Naive thymus-derived CD4-positive, alpha-beta T cell (primary cell): ENCODE measurements at regions of chr11 and their contacts with region 1.

Region 1: DNA sequence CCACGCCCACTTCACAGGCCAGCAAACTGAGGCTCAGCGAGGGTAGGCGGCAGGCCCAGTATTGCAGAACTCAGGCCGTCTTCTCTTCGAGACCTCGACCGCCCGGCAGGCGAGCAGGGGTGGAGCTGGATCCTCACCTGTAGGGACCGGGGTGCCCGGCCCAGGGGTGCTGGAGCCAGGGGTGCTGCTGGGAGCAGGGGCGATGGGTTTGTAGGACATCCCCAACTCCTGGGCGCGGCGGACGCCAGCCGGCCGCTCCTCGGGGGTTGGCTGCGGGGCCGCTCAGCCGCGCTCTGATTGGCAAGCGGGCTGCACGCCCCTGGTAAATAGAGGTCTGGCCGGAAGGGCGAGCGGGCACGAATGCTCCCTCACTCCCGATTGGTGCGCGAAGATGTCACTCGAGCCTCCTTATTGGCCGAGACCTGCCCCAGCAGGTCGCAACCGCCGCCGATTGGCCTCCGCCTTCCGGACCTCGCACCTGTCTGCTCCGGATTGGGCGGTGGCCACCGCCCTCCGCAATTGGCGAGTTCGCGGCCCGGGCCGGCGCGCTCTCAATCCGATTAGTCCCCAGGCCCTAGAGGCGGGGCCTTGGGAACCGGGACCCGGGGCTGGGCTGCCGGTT is at the start of gene CDK2AP2:
- DNase-seq: peak in 8 of 9 donors; percentile 89 to 97 (median 96)
- ATAC-seq: peak; percentile 81
- H3K4me3 ChIP-seq: peak within 1 kb of the TSS; percentile 91
- H3K4me3 Mint-ChIP-seq: peak within 1 kb of the TSS; percentile 89 to 95 (median 90)
- H3K27ac ChIP-seq: peak within 1 kb of the TSS; percentile 96
- H3K27ac Mint-ChIP-seq: peak within 1 kb of the TSS; percentile 87 to 98 (median 96)
- H3K4me1 ChIP-seq: peaks cover 40 to 43% of the 10 kb centered on the region in 2 donors
- H3K4me1 Mint-ChIP-seq: peaks cover 26 to 45% (median 36%) of the 10 kb centered on the region in 7 donors
- H3K27me3 ChIP-seq: no peaks in the 10 kb centered on the region
- H3K27me3 Mint-ChIP-seq: peaks cover 0 to 18% (median 0%) of the 10 kb centered on the region in 5 donors
- total RNA-seq, gene CDK2AP2: 31.0 to 168 (median 61.9) TPM

Region 2: DNA sequence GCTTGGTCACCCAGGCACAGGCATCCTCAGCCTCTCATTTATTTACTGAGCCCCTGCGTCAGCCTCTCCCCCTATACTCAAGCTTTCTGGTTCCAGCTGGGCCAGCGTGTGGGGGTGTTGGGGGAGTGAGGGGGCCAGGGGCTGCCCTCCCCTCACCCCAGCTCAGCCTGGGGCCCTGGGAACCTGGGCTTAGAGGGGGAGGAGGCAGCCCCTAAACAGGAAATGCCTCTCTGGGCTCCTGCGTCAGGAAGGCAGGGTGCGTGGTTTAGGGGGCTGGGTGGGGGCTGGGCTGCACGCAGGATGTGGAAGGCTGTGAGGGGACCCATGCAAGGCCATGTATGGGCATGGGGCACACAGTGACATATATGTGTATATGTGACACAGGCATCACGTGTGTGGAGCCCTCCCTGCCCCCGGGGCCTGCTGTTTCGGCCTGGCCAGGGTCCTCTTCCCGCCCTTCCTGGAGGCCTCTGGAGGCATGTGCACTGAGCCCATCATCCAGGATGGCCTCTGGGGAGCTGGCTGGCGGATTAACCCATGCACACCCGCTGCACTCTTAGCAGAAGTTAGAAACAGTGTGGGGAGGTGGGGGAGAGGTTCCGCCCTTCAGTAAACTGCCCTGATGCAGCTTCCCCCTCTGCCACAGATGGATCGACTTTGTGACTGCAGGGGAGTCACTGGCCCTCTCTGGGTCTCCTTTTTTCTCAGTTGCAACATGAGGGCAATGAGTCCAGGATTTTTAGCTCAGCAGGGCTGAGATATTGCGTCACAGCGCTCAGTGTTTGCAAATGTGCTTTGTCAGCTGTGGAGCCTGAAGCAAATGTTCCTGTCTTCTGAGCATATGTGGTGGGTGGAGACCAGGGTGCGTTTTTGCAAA is 1190.0 kb before region 1 on chr11:
- CTCF ChIA-PET with region 1: no interaction called
- POLR2A ChIA-PET with region 1: no interaction called
- intact Hi-C with region 1: loop called in 1 of 2 experiments (anchors 5 kb)
- DNase-seq: peak in 7 of 9 donors; percentile 79 to 96 (median 86)
- ATAC-seq: peak; percentile 93
- H3K4me3 ChIP-seq: peak overlapping the region; percentile 54
- H3K4me3 Mint-ChIP-seq: peak overlapping the region; percentile 45 to 89 (median 83)
- H3K27ac ChIP-seq: peak overlapping the region; percentile 99
- H3K27ac Mint-ChIP-seq: peak overlapping the region; percentile 88 to 100 (median 99)
- H3K4me1 ChIP-seq: peaks cover 32 to 60% of the 10 kb centered on the region in 2 donors
- H3K4me1 Mint-ChIP-seq: peaks cover 39 to 78% (median 63%) of the 10 kb centered on the region in 7 donors
- H3K27me3 ChIP-seq: no peaks in the 10 kb centered on the region
- H3K27me3 Mint-ChIP-seq: peaks cover 0 to 9% (median 0%) of the 10 kb centered on the region in 5 donors

Region 3: GRCh38 chr11:67239783-67240575 is 268.0 kb before region 1 on chr11:
- CTCF ChIA-PET with region 1: no interaction called
- POLR2A ChIA-PET with region 1: no interaction called
- intact Hi-C with region 1: loop called (anchors 1 to 5 kb)
- DNase-seq: peak; percentile 81 to 99 (median 98)
- ATAC-seq: peak; percentile 94
- H3K4me3 ChIP-seq: peak overlapping the region; percentile 89
- H3K4me3 Mint-ChIP-seq: peak overlapping the region; percentile 93 to 100 (median 98)
- H3K27ac ChIP-seq: peak overlapping the region; percentile 97
- H3K27ac Mint-ChIP-seq: peak overlapping the region; percentile 92 to 100 (median 99)
- H3K4me1 ChIP-seq: peaks cover 24 to 41% of the 10 kb centered on the region in 2 donors
- H3K4me1 Mint-ChIP-seq: peaks cover 47 to 62% (median 61%) of the 10 kb centered on the region in 7 donors
- H3K27me3 ChIP-seq: no peaks in the 10 kb centered on the region
- H3K27me3 Mint-ChIP-seq: no peaks in the 10 kb centered on the region

Region 4: GRCh38 chr11:67391304-67392132 is 116.5 kb before region 1 on chr11 and contains the start of gene RAD9A:
- CTCF ChIA-PET with region 1: interaction called, 4 read pairs
- POLR2A ChIA-PET with region 1: interaction called, 4 read pairs
- intact Hi-C with region 1: loop called (anchors 1 kb)
- DNase-seq: peak; percentile 80 to 94 (median 87)
- ATAC-seq: peak; percentile 90
- H3K4me3 ChIP-seq: peak within 1 kb of the TSS; percentile 49
- H3K4me3 Mint-ChIP-seq: peak within 1 kb of the TSS; percentile 84 to 95 (median 88)
- H3K27ac ChIP-seq: peak within 1 kb of the TSS; percentile 83
- H3K27ac Mint-ChIP-seq: peak within 1 kb of the TSS; percentile 47 to 92 (median 82)
- H3K4me1 ChIP-seq: peaks cover 15 to 16% of the 10 kb centered on the region in 2 donors
- H3K4me1 Mint-ChIP-seq: peaks cover 27 to 47% (median 34%) of the 10 kb centered on the region in 7 donors
- H3K27me3 ChIP-seq: no peaks in the 10 kb centered on the region
- H3K27me3 Mint-ChIP-seq: peaks cover 0 to 3% (median 0%) of the 10 kb centered on the region in 5 donors
- total RNA-seq, gene RAD9A: 25.6 to 48.0 (median 45.0) TPM

Region 5: GRCh38 chr11:67428052-67428914 is 79.7 kb before region 1 on chr11 and contains the start of gene RPS6KB2:
- CTCF ChIA-PET with region 1: no interaction called
- POLR2A ChIA-PET with region 1: interaction called, 4 read pairs
- intact Hi-C with region 1: loop called (anchors 1 kb)
- DNase-seq: peak; percentile 95 to 100 (median 98)
- ATAC-seq: peak; percentile 97
- H3K4me3 ChIP-seq: peak within 1 kb of the TSS; percentile 82
- H3K4me3 Mint-ChIP-seq: peak within 1 kb of the TSS; percentile 92 to 100 (median 98)
- H3K27ac ChIP-seq: peak within 1 kb of the TSS; percentile 97
- H3K27ac Mint-ChIP-seq: peak within 1 kb of the TSS; percentile 94 to 98 (median 96)
- H3K4me1 ChIP-seq: peaks cover 19 to 38% of the 10 kb centered on the region in 2 donors
- H3K4me1 Mint-ChIP-seq: peaks cover 19 to 62% (median 43%) of the 10 kb centered on the region in 7 donors
- H3K27me3 ChIP-seq: no peaks in the 10 kb centered on the region
- H3K27me3 Mint-ChIP-seq: no peaks in the 10 kb centered on the region
- total RNA-seq, gene RPS6KB2: 61.9 to 83.9 (median 77.7) TPM

Region 6: DNA sequence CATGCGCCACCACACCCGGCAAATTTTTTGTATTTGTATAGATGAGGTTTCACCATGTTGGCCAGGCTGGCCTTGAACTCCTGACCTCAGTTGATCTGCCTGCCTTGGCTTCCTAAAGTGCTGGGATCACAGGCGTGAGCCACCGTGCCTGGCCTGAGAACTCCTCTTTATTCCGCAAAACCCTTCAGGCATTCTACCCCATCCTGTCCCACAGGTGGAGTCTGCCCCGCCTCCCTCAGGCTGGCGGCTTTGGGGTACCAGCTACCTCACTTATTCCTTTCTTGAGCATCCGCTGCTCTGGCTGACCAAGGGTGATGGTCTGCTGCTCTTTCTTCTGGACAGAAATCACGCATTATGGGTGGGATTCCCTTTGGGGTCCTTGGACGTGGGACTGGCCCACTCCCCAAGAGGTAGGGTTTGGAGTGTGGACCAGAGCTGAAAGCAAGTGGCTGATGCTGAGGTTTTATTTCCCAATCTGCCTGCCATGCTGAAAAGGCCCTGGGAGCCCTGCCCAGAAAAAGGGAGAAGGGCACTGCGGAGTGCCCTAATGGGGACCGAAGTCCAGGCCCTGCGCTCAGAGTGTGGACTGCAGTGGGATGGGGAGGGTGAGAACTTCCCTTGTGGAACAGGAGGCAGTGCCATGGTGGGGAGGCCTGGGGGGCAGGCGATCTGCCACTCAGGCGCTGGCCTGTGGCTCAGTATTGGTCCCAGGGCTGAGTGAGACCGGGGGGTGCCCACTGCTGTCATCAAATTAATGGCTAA is 59.9 kb before region 1 on chr11:
- CTCF ChIA-PET with region 1: no interaction called
- POLR2A ChIA-PET with region 1: no interaction called
- intact Hi-C with region 1: no loop called
- DNase-seq: no peak
- ATAC-seq: no peak
- H3K4me3 ChIP-seq: no peak overlapping the region
- H3K4me3 Mint-ChIP-seq: peak overlapping the region in 7 of 10 donors; percentile 7 to 77 (median 23)
- H3K27ac ChIP-seq: peak overlapping the region; percentile 85
- H3K27ac Mint-ChIP-seq: peak overlapping the region in 8 of 9 donors; percentile 31 to 99 (median 96)
- H3K4me1 ChIP-seq: peaks cover 38 to 56% of the 10 kb centered on the region in 2 donors
- H3K4me1 Mint-ChIP-seq: peaks cover 41 to 80% (median 50%) of the 10 kb centered on the region in 7 donors
- H3K27me3 ChIP-seq: no peaks in the 10 kb centered on the region
- H3K27me3 Mint-ChIP-seq: no peaks in the 10 kb centered on the region

Region 7: GRCh38 chr11:67482825-67483798 is 24.9 kb before region 1 on chr11 and contains the start of gene AIP:
- CTCF ChIA-PET with region 1: interaction called, 6 read pairs
- POLR2A ChIA-PET with region 1: interaction called, 40 read pairs
- intact Hi-C with region 1: loop called (anchors 1 kb)
- DNase-seq: peak; percentile 88 to 99 (median 98)
- ATAC-seq: peak; percentile 89
- H3K4me3 ChIP-seq: peak within 1 kb of the TSS; percentile 80
- H3K4me3 Mint-ChIP-seq: peak within 1 kb of the TSS; percentile 90 to 100 (median 96)
- H3K27ac ChIP-seq: peak within 1 kb of the TSS; percentile 80
- H3K27ac Mint-ChIP-seq: peak within 1 kb of the TSS; percentile 95 to 100 (median 99)
- H3K4me1 ChIP-seq: peaks cover 40 to 42% of the 10 kb centered on the region in 2 donors
- H3K4me1 Mint-ChIP-seq: peaks cover 40 to 57% (median 51%) of the 10 kb centered on the region in 7 donors
- H3K27me3 ChIP-seq: no peaks in the 10 kb centered on the region
- H3K27me3 Mint-ChIP-seq: peaks cover 0 to 5% (median 0%) of the 10 kb centered on the region in 5 donors
- total RNA-seq, gene AIP: 107 to 156 (median 137) TPM

Region 8: DNA sequence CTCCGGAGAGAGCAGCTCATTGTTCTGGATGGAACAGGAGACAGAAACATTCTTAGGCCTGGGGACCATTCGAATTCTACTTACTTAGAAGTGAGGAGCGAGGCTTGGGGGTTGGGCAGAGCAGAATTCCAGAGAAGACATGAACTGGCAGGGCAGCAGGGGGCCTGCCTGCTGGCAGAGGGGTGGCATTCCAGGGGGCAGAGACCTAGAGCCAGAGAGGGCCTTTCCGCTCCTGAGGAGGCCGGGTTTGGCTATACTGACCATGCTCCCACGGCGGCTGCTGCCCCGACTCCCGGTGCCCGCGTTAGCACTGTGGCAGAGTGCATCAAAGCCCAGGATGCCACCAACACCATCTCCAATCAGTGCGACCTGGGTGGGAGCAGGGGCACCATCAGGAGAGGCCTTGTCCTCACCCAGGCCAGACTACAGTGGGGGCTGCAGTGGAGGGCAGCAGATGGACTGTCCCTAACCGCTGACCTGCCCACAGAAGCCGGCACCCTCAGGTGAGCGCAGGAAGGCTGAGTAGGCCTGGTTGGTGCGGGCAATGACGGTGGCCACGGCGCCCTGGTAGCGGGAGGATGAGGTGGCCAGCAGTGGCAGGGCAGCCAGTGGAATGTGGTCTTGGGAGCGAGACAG is 10.2 kb before region 1 on chr11:
- CTCF ChIA-PET with region 1: no interaction called
- POLR2A ChIA-PET with region 1: no interaction called
- intact Hi-C with region 1: no loop called
- DNase-seq: no peak
- ATAC-seq: no peak
- H3K4me3 ChIP-seq: no peak overlapping the region
- H3K4me3 Mint-ChIP-seq: no peak overlapping the region
- H3K27ac ChIP-seq: no peak overlapping the region
- H3K27ac Mint-ChIP-seq: no peak overlapping the region
- H3K4me1 ChIP-seq: no peaks in the 10 kb centered on the region
- H3K4me1 Mint-ChIP-seq: peaks cover 10 to 15% (median 11%) of the 10 kb centered on the region in 7 donors
- H3K27me3 ChIP-seq: no peaks in the 10 kb centered on the region
- H3K27me3 Mint-ChIP-seq: no peaks in the 10 kb centered on the region

Region 9: GRCh38 chr11:67539550-67539949 is 31.6 kb after region 1 on chr11:
- CTCF ChIA-PET with region 1: no interaction called
- POLR2A ChIA-PET with region 1: no interaction called
- intact Hi-C with region 1: no loop called
- DNase-seq: no peak
- ATAC-seq: no peak
- H3K4me3 ChIP-seq: no peak overlapping the region
- H3K4me3 Mint-ChIP-seq: no peak overlapping the region
- H3K27ac ChIP-seq: no peak overlapping the region
- H3K27ac Mint-ChIP-seq: no peak overlapping the region
- H3K4me1 ChIP-seq: no peaks in the 10 kb centered on the region
- H3K4me1 Mint-ChIP-seq: no peaks in the 10 kb centered on the region
- H3K27me3 ChIP-seq: no peaks in the 10 kb centered on the region
- H3K27me3 Mint-ChIP-seq: peaks cover 0 to 4% (median 2%) of the 10 kb centered on the region in 5 donors

Region 10: GRCh38 chr11:67563354-67564114 is 55.6 kb after region 1 on chr11:
- CTCF ChIA-PET with region 1: no interaction called
- POLR2A ChIA-PET with region 1: no interaction called
- intact Hi-C with region 1: no loop called
- DNase-seq: no peak
- ATAC-seq: no peak
- H3K4me3 ChIP-seq: no peak overlapping the region
- H3K4me3 Mint-ChIP-seq: no peak overlapping the region
- H3K27ac ChIP-seq: no peak overlapping the region
- H3K27ac Mint-ChIP-seq: no peak overlapping the region
- H3K4me1 ChIP-seq: no peaks in the 10 kb centered on the region
- H3K4me1 Mint-ChIP-seq: peaks cover 0 to 9% (median 0%) of the 10 kb centered on the region in 7 donors
- H3K27me3 ChIP-seq: no peaks in the 10 kb centered on the region
- H3K27me3 Mint-ChIP-seq: peaks cover 0 to 24% (median 0%) of the 10 kb centered on the region in 5 donors

Region 11: GRCh38 chr11:67630228-67630942 is 122.4 kb after region 1 on chr11:
- CTCF ChIA-PET with region 1: no interaction called
- POLR2A ChIA-PET with region 1: no interaction called
- intact Hi-C with region 1: loop called (anchors 1 kb)
- DNase-seq: peak in 8 of 9 donors; percentile 40 to 97 (median 86)
- ATAC-seq: peak; percentile 87
- H3K4me3 ChIP-seq: peak overlapping the region; percentile 84
- H3K4me3 Mint-ChIP-seq: peak overlapping the region; percentile 84 to 94 (median 89)
- H3K27ac ChIP-seq: peak overlapping the region; percentile 85
- H3K27ac Mint-ChIP-seq: peak overlapping the region; percentile 74 to 96 (median 89)
- H3K4me1 ChIP-seq: peaks cover 8 to 9% of the 10 kb centered on the region in 2 donors
- H3K4me1 Mint-ChIP-seq: peaks cover 5 to 15% (median 7%) of the 10 kb centered on the region in 7 donors
- H3K27me3 ChIP-seq: no peaks in the 10 kb centered on the region
- H3K27me3 Mint-ChIP-seq: no peaks in the 10 kb centered on the region